ENCODE measurements at regions of chr4 and their contacts with region 1.

Region 1: GRCh38 chr4:128528793-128529553 is 241.4 kb upstream of the PGRMC2 start:
- DNase-seq: peak; percentile 34 to 87
- H3K4me3 ChIP-seq: no peak overlapping the region
- H3K27ac ChIP-seq: peak overlapping the region; percentile 82 to 83
- H3K4me1 ChIP-seq: peaks cover 8 to 35% of the 10 kb centered on the region in 2 donors
- H3K27me3 ChIP-seq: no peaks in the 10 kb centered on the region
- CTCF ChIP-seq: no peak

Region 2: DNA sequence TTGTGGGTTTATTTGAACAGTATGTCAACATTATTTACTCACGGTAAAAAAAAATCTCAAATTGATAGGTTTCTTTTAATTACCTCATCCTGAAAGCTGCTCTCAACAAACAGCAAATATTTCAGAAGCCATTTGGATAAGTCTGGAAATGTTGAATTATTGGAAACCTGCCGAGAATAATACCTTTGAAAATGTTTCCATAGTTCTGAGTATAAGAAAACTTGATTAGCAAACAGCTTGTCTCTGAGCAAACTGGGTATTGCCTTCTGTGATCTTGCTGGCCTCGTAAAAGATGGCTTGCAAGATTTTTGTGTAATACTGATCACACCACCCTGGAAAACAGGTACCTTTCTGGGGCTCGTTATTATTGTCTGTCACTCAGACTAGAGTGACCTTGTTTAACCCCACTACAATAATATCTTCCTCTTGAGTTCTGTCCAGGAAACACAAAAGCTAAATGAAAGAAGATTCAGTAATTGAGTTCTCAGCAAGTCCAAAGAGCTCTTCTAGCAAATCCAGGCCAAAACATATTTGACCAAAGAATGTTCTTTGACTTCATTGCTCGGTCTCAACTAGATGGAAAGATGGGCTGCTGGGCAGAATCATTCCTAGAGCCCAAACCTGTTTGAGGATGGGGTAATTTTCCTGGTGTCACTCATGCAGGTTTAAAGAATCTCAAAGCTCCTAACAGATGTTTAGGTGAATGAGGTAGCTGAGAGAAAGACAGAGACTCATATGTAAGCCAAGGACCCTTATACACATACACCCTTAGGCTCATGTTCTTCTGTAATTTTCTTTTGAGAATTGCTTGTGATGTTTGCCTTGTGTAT is 24.9 kb after region 1 on chr4:
- intact Hi-C with region 1: loop called (anchors 2 kb)
- DNase-seq: no peak
- H3K4me3 ChIP-seq: peak overlapping the region; percentile 61 to 84
- H3K27ac ChIP-seq: peak overlapping the region; percentile 89 to 94
- H3K4me1 ChIP-seq: peaks cover 4 to 9% of the 10 kb centered on the region in 2 donors
- H3K27me3 ChIP-seq: no peaks in the 10 kb centered on the region
- CTCF ChIP-seq: no peak

Region 3: GRCh38 chr4:128658214-128658631 is 129.2 kb after region 1 on chr4:
- intact Hi-C with region 1: loop called (anchors 5 kb)
- DNase-seq: no peak
- H3K4me3 ChIP-seq: no peak overlapping the region
- H3K27ac ChIP-seq: peak overlapping the region; percentile 81 to 86
- H3K4me1 ChIP-seq: peaks cover 3 to 39% of the 10 kb centered on the region in 2 donors
- H3K27me3 ChIP-seq: no peaks in the 10 kb centered on the region
- CTCF ChIP-seq: no peak

Measured in ascending aorta (tissue), 2 donors.